ENCODE measurements at regions of chr4 and their contacts with region 1.

Region 1: DNA sequence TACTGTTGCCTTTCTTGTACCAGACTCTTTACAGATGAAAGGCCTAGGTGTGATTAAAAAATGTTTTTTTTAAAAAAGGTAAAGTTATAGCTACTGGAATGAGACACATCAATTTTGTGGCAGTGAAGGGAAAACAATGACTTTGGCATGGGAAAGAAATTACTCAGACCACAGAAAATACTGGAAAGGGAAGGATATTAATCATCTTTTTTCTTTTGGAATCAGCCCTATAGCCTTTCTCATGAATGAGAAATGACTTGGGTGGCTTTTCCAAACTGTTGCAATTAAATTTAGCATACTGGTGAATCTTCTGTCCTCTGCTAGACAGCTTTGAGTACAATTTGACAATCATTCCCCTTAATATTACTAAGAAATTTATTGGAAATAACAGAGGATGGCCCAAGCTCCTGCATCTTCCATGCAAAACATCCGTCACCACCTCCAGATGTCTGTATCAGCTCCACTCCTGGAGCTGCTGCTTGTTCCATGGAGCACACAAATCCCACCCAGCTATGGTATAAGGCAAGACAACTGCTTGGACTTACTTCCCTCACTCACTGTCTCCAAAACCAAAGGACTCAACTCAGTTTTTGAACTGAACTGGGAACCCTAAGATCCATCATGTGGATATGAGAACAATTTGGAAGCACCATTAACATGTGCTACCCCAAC is 97.6 kb upstream of the ARSJ start:
- H3K4me3 ChIP-seq: no peak overlapping the region
- H3K27ac ChIP-seq: no peak overlapping the region
- H3K4me1 ChIP-seq: no peaks in the 10 kb centered on the region
- CTCF ChIP-seq: no peak

Region 2: DNA sequence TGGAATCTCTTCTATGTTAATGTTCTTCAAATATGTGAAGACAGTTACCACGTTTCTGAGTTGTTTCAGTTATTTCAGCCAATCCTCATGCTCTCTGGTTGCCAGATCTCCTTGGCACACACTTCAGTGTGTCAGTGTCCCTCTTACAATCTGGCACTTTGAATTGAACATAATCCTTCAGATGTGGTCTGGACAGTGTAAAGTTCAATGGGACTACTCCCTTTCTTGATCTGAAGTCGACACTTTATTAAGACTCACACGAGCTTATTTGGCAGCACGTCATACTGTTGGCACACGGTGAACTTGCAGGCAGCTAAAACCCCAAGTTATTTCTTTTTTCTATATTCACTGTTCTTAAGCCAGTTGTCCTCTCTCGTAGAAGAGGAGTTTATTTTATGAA is 125.8 kb before region 1 on chr4:
- CTCF ChIA-PET with region 1: interaction called, 17 read pairs
- POLR2A ChIA-PET with region 1: no interaction called
- H3K4me3 ChIP-seq: no peak overlapping the region
- H3K27ac ChIP-seq: no peak overlapping the region
- H3K4me1 ChIP-seq: no peaks in the 10 kb centered on the region
- CTCF ChIP-seq: no peak

Region 3: GRCh38 chr4:113958766-113959538 is 118.1 kb before region 1 on chr4:
- CTCF ChIA-PET with region 1: interaction called, 17 read pairs
- POLR2A ChIA-PET with region 1: no interaction called
- H3K4me3 ChIP-seq: peak overlapping the region; percentile 6
- H3K27ac ChIP-seq: no peak overlapping the region
- H3K4me1 ChIP-seq: peaks cover 6% of the 10 kb centered on the region
- CTCF ChIP-seq: no peak